Calu3 (cell line): ENCODE measurements at regions of chr3 and their contacts with region 1.

Region 1: DNA sequence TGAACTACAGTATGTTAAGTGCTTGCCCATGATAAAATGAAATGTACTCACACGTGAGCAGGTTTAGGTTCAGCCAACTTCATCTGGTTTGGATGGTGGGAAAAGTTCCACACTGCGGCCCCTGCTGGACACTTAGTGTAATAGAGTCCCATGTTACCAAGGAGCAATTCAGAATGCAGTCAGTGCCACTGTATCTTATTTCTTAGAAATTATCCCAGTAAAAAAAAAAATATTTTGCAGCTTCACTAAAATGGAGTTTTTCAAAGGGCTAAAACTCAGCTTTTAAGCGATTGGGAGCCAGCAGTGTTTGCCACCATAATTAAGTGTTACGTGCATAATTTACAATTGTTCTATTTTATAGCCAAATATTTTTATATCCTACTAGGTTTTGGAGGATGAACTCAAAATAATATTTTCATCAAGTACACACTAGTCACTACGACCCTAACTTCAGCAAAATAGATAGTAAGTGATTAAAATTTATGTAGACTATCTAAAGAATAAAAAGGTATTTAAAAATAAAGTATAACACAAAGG is 371.7 kb upstream of the GBE1 start:
- DNase-seq: peak; percentile 54
- H3K4me3 Mint-ChIP-seq: no peak overlapping the region
- H3K27ac Mint-ChIP-seq: no peak overlapping the region
- H3K4me1 Mint-ChIP-seq: peaks cover 7% of the 10 kb centered on the region
- H3K27me3 Mint-ChIP-seq: no peaks in the 10 kb centered on the region
- CTCF ChIP-seq: peak; percentile 70

Region 2: DNA sequence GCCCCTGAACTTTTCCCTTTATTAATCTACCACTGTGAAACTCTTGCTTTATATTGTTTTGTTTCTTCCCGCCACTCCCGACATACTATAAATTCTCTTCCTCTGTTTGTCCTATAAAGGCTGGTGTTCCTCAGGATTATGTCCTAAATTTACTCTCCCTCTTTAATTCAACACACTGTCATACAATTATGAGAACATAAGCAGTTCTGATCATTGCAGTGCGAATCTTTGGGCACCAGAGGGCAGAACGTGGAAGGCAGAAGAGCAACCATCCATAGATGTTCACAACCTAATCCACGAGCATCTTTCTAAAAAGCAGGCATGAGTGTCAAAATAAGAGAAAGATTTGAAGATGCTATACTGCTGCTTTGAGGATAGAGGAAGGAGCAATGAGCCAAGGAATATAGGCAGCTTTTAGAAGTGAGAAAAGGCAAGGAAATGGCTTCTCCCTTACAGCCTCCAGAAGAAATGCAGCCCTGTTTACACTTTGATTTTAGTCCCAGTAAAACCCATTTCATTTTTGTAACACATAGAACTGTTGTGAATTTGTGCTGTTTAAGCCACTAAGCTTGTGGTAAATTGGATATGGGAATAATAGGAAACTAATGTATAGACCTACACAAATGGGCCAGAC is 551.1 kb before region 1 on chr3:
- CTCF ChIA-PET with region 1: no interaction called
- intact Hi-C with region 1: loop called (anchors 5 kb)
- DNase-seq: peak; percentile 38
- H3K4me3 Mint-ChIP-seq: no peak overlapping the region
- H3K27ac Mint-ChIP-seq: no peak overlapping the region
- H3K4me1 Mint-ChIP-seq: no peaks in the 10 kb centered on the region
- H3K27me3 Mint-ChIP-seq: no peaks in the 10 kb centered on the region
- CTCF ChIP-seq: no peak

Region 3: DNA sequence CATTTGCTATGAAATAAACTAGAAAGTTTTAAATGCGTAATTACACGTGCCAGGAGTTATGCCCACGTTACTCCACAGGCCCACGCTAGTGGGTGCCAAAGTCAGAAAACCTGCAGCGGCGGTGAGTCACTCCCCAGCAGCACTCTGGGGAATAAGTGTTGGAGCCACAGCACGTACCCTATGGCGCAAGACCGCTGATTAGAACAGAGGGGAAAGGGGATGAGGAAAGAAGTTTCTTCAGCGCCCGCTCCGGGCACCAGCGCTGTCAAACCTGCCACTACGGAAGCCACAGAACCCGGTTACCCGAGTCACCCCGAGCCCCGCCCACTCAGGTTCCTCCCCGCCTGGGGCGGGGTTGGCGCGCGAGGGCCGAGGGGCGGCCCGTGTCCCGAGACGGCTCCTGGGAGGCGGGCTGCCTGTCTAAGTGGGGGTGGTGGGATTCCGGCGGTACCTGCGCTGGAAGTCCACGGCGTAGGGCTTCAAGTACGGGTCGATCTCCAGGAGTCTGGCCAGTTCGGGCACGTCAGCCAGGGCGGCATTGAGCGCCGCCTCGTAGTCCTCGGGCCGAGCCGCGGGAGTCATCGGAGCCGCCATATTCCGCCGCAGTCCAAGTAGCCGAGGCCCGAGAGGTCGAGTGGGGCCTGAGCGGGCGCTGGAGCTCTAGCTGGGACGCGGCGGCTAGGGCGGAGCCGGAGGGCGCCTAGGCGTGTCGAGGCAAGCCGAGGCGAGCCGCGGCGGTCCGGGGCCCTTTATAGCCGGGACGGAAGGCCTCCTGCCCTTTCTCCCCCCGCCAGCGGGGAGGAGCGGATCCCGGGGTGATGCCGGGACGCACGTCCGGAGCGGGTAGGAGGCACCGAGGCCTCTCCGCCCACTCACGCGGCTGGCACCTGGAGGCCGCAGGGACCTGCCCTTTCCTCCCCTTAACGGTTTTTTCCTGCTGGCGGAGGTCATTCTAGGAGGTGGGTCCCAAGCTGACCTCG is 371.9 kb before region 1 on chr3 and contains the start of gene GBE1:
- CTCF ChIA-PET with region 1: no interaction called
- intact Hi-C with region 1: loop called (anchors 10 kb)
- DNase-seq: peak; percentile 93
- H3K4me3 Mint-ChIP-seq: peak within 1 kb of the TSS; percentile 77
- H3K27ac Mint-ChIP-seq: peak within 1 kb of the TSS; percentile 93
- H3K4me1 Mint-ChIP-seq: peaks cover 17% of the 10 kb centered on the region
- H3K27me3 Mint-ChIP-seq: no peaks in the 10 kb centered on the region
- CTCF ChIP-seq: no peak
- total RNA-seq, gene GBE1: 10.8 and 12.7 TPM in 2 replicates

Region 4: DNA sequence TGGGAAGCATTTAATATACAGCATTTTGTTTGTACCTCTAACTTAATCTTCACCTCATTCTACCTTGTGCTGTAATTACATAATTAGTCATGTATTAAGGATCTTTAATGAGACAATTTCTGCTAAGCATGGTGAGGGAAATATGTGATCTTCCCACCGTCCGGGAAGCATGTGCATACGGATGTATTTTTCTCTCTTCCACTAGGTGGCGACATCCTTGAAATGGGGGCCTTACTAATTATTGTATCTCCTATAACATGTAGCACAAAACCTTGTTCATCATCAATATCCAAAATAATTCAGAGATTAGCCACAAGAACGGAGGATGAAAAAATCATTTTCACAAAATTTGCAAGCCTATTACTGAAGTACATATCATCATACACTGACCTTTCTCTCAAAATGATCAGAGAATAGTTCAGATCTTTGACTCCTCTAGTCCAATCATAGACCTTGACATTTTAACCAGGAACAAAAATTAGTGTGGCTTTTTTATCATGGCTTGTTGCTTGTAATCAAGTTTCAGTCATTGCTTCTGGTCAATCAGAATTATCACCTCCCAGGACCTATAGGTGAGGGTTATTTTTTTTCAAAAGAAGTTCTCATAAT is 222.8 kb before region 1 on chr3:
- CTCF ChIA-PET with region 1: no interaction called
- intact Hi-C with region 1: loop called (anchors 5 kb)
- DNase-seq: peak; percentile 32
- H3K4me3 Mint-ChIP-seq: no peak overlapping the region
- H3K27ac Mint-ChIP-seq: no peak overlapping the region
- H3K4me1 Mint-ChIP-seq: no peaks in the 10 kb centered on the region
- H3K27me3 Mint-ChIP-seq: no peaks in the 10 kb centered on the region
- CTCF ChIP-seq: peak; percentile 44

Region 5: DNA sequence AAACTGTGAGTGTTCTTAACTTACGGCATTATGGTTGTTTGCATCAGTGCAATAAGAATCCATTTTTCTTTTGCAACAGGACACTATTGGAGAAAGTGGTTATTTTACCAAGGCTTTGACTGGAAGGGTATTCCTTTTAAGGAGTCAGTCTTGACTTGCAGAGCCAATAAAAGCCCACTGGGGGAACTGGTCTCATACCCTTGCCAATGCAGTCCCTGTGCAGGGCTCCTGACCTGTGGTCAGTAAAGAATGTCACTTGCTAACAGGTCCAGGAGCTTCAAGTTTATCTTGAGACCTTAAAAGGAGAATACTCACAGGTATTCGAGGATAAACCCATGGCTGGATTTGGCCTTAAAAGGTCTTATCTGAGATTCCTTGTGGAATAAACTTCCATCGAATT is 143.9 kb before region 1 on chr3:
- CTCF ChIA-PET with region 1: no interaction called
- intact Hi-C with region 1: no loop called
- DNase-seq: no peak
- H3K4me3 Mint-ChIP-seq: no peak overlapping the region
- H3K27ac Mint-ChIP-seq: no peak overlapping the region
- H3K4me1 Mint-ChIP-seq: no peaks in the 10 kb centered on the region
- H3K27me3 Mint-ChIP-seq: no peaks in the 10 kb centered on the region
- CTCF ChIP-seq: no peak

Region 6: DNA sequence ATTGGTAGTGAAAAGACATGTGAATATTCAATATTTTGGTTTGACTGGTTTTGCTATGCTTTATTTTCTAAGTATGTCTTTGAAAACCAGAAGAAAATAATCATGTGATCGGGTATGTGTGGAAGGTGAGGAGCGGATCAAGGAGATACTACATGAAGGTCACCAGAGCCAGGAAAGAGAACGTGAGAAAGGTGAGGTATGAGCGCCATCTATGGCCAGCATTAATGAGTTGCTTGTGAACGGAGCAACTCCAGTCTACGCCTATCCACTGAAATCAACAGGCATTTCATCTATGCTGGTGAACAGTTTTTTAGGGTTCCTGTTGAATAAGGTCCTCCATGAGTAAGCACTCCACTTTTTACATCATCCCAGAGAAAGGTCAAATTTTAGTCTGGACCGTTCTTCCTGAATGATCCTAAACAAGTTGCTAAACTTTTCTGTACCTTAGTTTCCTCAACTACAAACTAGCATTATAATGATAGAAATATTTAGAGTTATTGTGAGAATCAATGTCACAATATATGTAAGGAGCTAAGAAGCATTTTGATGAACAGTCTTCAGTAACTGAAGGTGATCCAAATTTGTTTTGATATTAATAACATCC is 1390.4 kb after region 1 on chr3:
- CTCF ChIA-PET with region 1: no interaction called
- intact Hi-C with region 1: loop called (anchors 10 kb)
- DNase-seq: peak; percentile 60
- H3K4me3 Mint-ChIP-seq: no peak overlapping the region
- H3K27ac Mint-ChIP-seq: no peak overlapping the region
- H3K4me1 Mint-ChIP-seq: no peaks in the 10 kb centered on the region
- H3K27me3 Mint-ChIP-seq: no peaks in the 10 kb centered on the region
- CTCF ChIP-seq: peak; percentile 57